ENCODE measurements at regions of chr17 and their contacts with region 1.

Region 1: DNA sequence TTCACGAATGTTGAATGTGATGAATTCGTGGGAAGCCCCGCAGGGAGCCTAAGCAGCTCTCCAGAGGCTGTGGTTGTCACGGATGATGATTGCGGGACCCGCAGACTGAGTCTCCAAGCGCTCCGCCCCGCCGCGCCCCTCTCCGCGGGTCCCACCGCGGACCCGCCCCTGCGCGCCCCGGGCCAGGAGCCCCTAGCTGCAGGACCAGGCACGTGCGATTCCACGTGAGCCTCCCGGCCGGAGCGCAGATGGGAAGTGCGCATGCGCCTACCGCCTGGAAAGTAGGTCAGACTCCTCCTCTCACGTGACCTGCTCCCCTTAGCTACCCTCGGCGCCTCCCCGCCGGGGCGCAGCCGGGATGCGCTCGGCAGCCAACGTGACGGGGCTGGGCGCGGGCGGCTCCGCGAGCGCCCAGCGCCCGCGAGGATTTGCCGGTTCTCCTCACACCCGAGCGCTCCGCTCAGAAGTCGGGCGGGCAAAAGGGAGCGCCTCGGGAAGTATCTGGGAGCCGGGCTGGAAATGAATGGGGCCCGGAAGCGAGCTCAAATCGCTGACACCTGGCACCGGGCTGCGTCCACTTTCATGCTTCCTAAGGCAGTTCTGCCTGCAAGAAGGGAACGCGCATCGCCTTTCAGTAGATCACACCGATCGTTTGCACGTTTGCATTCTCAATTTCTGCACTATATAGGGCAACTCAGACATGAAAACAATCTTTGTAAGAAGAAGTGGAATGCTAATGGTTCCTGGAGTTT is 26.4 kb upstream of the HLF start:
- DNase-seq: peak; percentile 95
- ATAC-seq: peak; percentile 99

Region 2: DNA sequence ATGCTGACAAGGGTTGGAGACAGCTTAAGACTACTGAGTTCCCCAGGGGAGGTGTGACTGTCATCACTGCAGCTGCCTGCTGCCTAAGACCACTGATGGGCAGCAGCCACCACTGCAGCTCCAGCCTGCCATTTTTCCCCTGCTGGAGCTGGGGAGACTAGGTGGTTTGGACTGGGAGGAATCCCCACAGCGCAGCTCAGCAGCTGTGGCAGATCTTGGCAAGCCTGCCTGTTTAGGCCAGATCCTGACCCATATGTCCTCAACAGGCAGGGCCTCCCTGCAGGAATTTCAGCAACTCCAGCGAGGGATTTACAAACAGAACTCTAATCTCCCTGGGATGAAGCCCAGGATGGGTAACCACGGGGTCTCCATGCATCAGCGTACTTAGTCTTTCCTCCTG is 694.1 kb before region 1 on chr17:
- intact Hi-C with region 1: no loop called
- DNase-seq: peak; percentile 39
- ATAC-seq: no peak

Region 3: DNA sequence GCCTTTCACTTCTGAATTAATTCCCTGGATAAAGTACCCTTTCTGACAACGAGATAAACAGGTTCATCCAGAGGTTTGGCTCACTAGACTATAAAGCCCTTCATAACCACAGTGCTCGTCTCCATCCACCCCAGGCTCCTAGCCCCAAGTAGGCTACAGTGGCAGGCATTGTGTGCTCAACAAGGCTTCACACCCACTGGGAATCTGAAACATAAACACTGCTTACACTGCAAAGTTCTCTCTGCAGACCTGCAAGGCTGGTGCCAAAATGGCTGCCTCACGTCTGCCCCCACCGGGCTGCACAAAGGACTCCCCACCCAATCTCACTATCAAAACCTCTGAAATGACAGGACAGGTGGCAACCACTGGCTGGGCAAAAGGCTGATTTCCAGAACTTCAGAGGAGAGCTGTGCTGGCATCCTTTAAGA is 21.3 kb after region 1 on chr17:
- intact Hi-C with region 1: loop called (anchors 2 kb)
- DNase-seq: no peak
- ATAC-seq: no peak

Region 4: GRCh38 chr17:55273579-55274354 is 35.4 kb after region 1 on chr17:
- intact Hi-C with region 1: no loop called
- DNase-seq: peak; percentile 85
- ATAC-seq: peak; percentile 82

Region 5: GRCh38 chr17:55295411-55296170 is 57.2 kb after region 1 on chr17:
- intact Hi-C with region 1: loop called (anchors 10 kb)
- DNase-seq: no peak
- ATAC-seq: peak; percentile 86